ENCODE measurements at regions of chr20 and their contacts with region 1.

Region 1: GRCh38 chr20:36573103-36573794 is at the start of gene TGIF2:
- DNase-seq: peak; percentile 95
- ATAC-seq: peak; percentile 75
- H3K4me3 Mint-ChIP-seq: peak within 1 kb of the TSS; percentile 88
- H3K27ac Mint-ChIP-seq: peak within 1 kb of the TSS; percentile 93
- H3K4me1 Mint-ChIP-seq: peaks cover 35% of the 10 kb centered on the region
- H3K27me3 Mint-ChIP-seq: no peaks in the 10 kb centered on the region
- total RNA-seq, gene TGIF2: 44.9 to 48.7 TPM

Region 2: GRCh38 chr20:36519944-36520343 is 53.3 kb before region 1 on chr20:
- CTCF ChIA-PET with region 1: no interaction called
- POLR2A ChIA-PET with region 1: no interaction called
- intact Hi-C with region 1: loop called in 1 of 2 experiments (anchors 2 kb)
- DNase-seq: no peak
- ATAC-seq: peak; percentile 55
- H3K4me3 Mint-ChIP-seq: no peak overlapping the region
- H3K27ac Mint-ChIP-seq: peak overlapping the region; percentile 76
- H3K4me1 Mint-ChIP-seq: peaks cover 14% of the 10 kb centered on the region
- H3K27me3 Mint-ChIP-seq: no peaks in the 10 kb centered on the region

Region 3: GRCh38 chr20:36605399-36606157 is 32.3 kb after region 1 on chr20 and contains the start of gene RAB5IF:
- CTCF ChIA-PET with region 1: interaction called, 34 read pairs
- POLR2A ChIA-PET with region 1: interaction called, 14 read pairs
- intact Hi-C with region 1: loop called (anchors 1 kb)
- DNase-seq: peak; percentile 100
- ATAC-seq: peak; percentile 91
- H3K4me3 Mint-ChIP-seq: peak within 1 kb of the TSS; percentile 100
- H3K27ac Mint-ChIP-seq: peak within 1 kb of the TSS; percentile 96
- H3K4me1 Mint-ChIP-seq: peaks cover 17% of the 10 kb centered on the region
- H3K27me3 Mint-ChIP-seq: no peaks in the 10 kb centered on the region
- total RNA-seq, gene RAB5IF: 71.7 to 90.2 TPM

Region 4: GRCh38 chr20:36745927-36746659 is 172.8 kb after region 1 on chr20 and contains the start of gene NDRG3:
- CTCF ChIA-PET with region 1: no interaction called
- POLR2A ChIA-PET with region 1: interaction called, 3 read pairs
- intact Hi-C with region 1: loop called in 1 of 2 experiments (anchors 2 kb)
- DNase-seq: peak; percentile 96
- ATAC-seq: peak; percentile 99
- H3K4me3 Mint-ChIP-seq: peak within 1 kb of the TSS; percentile 81
- H3K27ac Mint-ChIP-seq: peak within 1 kb of the TSS; percentile 87
- H3K4me1 Mint-ChIP-seq: peaks cover 20% of the 10 kb centered on the region
- H3K27me3 Mint-ChIP-seq: no peaks in the 10 kb centered on the region
- total RNA-seq, gene NDRG3: 24.8 to 27.5 TPM

Region 5: GRCh38 chr20:36861875-36862801 is 288.9 kb after region 1 on chr20:
- CTCF ChIA-PET with region 1: no interaction called
- POLR2A ChIA-PET with region 1: no interaction called
- intact Hi-C with region 1: loop called in 1 of 2 experiments (anchors 2 kb)
- DNase-seq: no peak
- ATAC-seq: no peak
- H3K4me3 Mint-ChIP-seq: peak overlapping the region; percentile 37
- H3K27ac Mint-ChIP-seq: no peak overlapping the region
- H3K4me1 Mint-ChIP-seq: peaks cover 10% of the 10 kb centered on the region
- H3K27me3 Mint-ChIP-seq: peaks cover 21% of the 10 kb centered on the region